CD8-positive, alpha-beta T cell (primary cell): ENCODE measurements at regions of chr11 and their contacts with region 1.

Region 1: GRCh38 chr11:44565211-44565952 is at the start of gene CD82:
- DNase-seq: peak; percentile 88 to 98 (median 95)
- ATAC-seq: peak; percentile 73
- H3K4me3 ChIP-seq: peak within 1 kb of the TSS; percentile 86 to 89
- H3K4me3 Mint-ChIP-seq: peak within 1 kb of the TSS; percentile 82
- H3K27ac ChIP-seq: peak within 1 kb of the TSS; percentile 33 to 71
- H3K27ac Mint-ChIP-seq: peak within 1 kb of the TSS; percentile 82
- H3K4me1 ChIP-seq: peaks cover 47% of the 10 kb centered on the region
- H3K4me1 Mint-ChIP-seq: peaks cover 53% of the 10 kb centered on the region
- H3K27me3 ChIP-seq: no peaks in the 10 kb centered on the region
- H3K27me3 Mint-ChIP-seq: no peaks in the 10 kb centered on the region
- CTCF ChIP-seq: peak; percentile 39
- total RNA-seq, gene CD82: 28.1 to 32.4 TPM

Region 2: GRCh38 chr11:43687120-43687791 is 878.1 kb before region 1 on chr11:
- CTCF ChIA-PET with region 1: no interaction called
- POLR2A ChIA-PET with region 1: no interaction called
- intact Hi-C with region 1: loop called (anchors 5 to 10 kb)
- DNase-seq: no peak
- ATAC-seq: no peak
- H3K4me3 ChIP-seq: no peak overlapping the region
- H3K4me3 Mint-ChIP-seq: no peak overlapping the region
- H3K27ac ChIP-seq: no peak overlapping the region
- H3K27ac Mint-ChIP-seq: no peak overlapping the region
- H3K4me1 ChIP-seq: no peaks in the 10 kb centered on the region
- H3K4me1 Mint-ChIP-seq: peaks cover 37% of the 10 kb centered on the region
- H3K27me3 ChIP-seq: no peaks in the 10 kb centered on the region
- H3K27me3 Mint-ChIP-seq: no peaks in the 10 kb centered on the region
- CTCF ChIP-seq: no peak

Region 3: DNA sequence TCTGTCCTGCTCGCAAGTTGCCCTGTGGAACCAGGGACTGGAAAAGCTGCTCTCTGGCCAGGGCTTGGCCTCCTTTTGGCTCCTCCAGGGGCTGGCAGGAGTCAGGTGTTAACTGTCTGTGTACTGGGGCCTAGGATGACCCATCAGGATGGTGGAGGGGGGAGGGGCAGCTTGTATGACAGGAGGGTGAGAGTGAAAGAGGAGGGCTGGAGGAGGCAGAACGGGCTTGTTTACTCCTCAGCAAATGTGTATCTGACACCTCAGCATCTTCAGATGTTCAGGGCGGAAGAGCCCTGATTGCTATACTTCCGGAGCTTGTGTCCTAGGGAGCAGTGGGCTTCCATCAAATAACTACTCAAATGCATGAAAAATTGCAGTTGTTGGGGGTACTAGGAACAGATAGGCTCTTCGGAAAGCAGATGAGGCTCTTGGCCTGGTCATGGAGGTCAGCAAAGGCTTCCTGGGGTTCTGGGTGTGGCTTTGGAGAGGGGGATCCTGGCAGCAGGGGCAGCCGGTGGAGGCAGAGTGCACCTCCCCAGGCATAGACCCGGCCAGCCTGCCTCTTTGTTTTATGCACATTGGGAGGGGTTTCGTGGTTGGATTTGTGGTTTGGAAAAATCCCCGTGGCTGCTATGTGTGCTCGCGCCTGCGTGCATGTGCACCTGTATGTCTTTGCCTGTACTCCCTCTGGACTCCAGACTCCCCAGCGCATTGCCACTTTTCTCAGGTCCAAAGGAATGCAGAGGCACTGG is 31.3 kb after region 1 on chr11:
- CTCF ChIA-PET with region 1: interaction called, 4 read pairs
- POLR2A ChIA-PET with region 1: interaction called, 5 read pairs
- intact Hi-C with region 1: loop called (anchors 1 to 2 kb)
- DNase-seq: peak; percentile 25 to 88 (median 58)
- ATAC-seq: peak; percentile 83
- H3K4me3 ChIP-seq: peak overlapping the region; percentile 7 to 14
- H3K4me3 Mint-ChIP-seq: peak overlapping the region; percentile 61
- H3K27ac ChIP-seq: peak overlapping the region; percentile 25 to 55
- H3K27ac Mint-ChIP-seq: peak overlapping the region; percentile 93
- H3K4me1 ChIP-seq: peaks cover 31% of the 10 kb centered on the region
- H3K4me1 Mint-ChIP-seq: peaks cover 40% of the 10 kb centered on the region
- H3K27me3 ChIP-seq: no peaks in the 10 kb centered on the region
- H3K27me3 Mint-ChIP-seq: no peaks in the 10 kb centered on the region
- CTCF ChIP-seq: no peak

Region 4: DNA sequence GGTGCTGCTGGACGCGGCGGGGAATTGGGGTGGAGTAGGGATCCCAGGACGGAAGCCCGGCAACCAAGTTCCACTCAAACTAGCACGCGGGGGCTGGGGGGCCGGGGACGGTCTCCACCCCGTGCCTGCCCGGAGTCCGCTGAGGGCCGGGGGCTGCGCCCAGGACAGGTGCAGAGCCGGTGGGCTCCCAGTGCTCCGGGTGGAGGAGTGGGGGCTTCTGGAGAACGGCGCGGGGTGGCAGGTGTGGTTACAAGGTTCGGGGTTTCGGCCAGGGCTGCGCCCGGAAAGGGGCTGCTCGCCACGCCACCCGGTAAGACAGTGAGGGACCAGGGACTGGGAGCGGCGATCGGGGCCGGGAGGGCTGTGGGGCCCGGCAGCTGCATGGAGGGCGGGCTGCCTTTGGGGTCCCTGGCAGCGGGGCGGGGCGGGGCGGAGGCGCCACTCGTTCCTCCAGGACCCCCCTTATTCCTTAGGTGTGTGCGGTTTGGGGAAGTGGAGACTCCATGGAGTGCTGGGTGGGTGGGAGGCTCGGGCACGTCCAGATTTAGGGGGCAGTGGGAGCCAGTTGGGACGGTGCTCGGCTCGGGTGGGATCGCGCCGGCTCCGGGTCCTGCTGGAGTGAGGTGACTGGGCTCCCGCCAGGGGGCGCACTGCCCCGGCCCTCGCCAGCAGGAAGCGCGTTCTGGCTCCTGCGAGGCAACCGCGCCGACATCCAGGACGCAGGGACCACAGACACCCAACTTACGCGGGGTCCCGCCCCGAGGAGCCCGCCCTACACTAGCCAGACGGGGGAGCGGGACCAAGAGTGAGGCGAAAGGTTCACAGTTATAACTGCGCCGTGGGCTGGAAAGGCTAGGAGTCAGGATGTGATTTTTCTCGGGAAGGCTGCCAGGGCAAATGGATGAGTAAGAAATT is 162.2 kb after region 1 on chr11:
- CTCF ChIA-PET with region 1: interaction called, 4 read pairs
- POLR2A ChIA-PET with region 1: no interaction called
- intact Hi-C with region 1: loop called in 1 of 2 experiments (anchors 5 kb)
- DNase-seq: peak; percentile 55 to 87 (median 74)
- ATAC-seq: peak; percentile 71
- H3K4me3 ChIP-seq: peak overlapping the region; percentile 63 to 70
- H3K4me3 Mint-ChIP-seq: peak overlapping the region; percentile 84
- H3K27ac ChIP-seq: no peak overlapping the region
- H3K27ac Mint-ChIP-seq: peak overlapping the region; percentile 27
- H3K4me1 ChIP-seq: peaks cover 18% of the 10 kb centered on the region
- H3K4me1 Mint-ChIP-seq: peaks cover 30% of the 10 kb centered on the region
- H3K27me3 ChIP-seq: peaks cover 3 to 6% of the 10 kb centered on the region in 2 experiments
- H3K27me3 Mint-ChIP-seq: peaks cover 7% of the 10 kb centered on the region
- CTCF ChIP-seq: peak; percentile 90

Region 5: DNA sequence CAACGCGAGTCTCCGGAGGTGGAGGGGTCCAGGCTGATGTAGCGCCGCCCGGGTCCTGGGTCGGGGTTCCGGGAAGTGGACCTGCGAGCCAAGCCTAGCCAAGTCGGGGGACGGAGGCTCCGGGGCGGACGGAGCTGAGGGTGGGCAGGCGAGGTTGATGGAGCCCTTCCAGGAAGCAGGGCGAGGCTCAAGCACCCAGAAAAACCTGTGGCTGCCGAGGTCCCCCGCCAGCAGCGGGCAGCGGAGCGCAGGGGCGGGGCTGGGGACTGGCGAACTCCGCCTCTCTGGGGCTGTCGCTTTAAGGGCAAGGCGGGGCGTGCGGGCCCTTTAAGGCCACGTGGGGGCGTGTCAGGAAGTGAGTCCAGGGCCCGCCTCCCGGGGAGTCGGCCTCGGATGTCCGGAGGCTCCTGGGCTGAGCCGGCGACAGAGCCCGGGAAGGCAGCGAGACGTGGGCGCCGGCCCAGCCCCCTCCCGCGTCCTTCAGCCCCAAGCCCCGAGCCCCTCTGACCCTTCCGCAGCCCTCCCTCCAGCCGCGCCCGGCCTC is 1239.5 kb after region 1 on chr11 and contains the start of gene SLC35C1:
- CTCF ChIA-PET with region 1: no interaction called
- POLR2A ChIA-PET with region 1: no interaction called
- intact Hi-C with region 1: loop called in 1 of 2 experiments (anchors 10 kb)
- DNase-seq: peak; percentile 89 to 98 (median 97)
- ATAC-seq: peak; percentile 96
- H3K4me3 ChIP-seq: peak within 1 kb of the TSS; percentile 97
- H3K4me3 Mint-ChIP-seq: peak within 1 kb of the TSS; percentile 90
- H3K27ac ChIP-seq: peak within 1 kb of the TSS; percentile 76 to 81
- H3K27ac Mint-ChIP-seq: peak within 1 kb of the TSS; percentile 81
- H3K4me1 ChIP-seq: peaks cover 32% of the 10 kb centered on the region
- H3K4me1 Mint-ChIP-seq: peaks cover 44% of the 10 kb centered on the region
- H3K27me3 ChIP-seq: no peaks in the 10 kb centered on the region
- H3K27me3 Mint-ChIP-seq: no peaks in the 10 kb centered on the region
- CTCF ChIP-seq: no peak
- total RNA-seq, gene SLC35C1: 3.1 to 3.3 TPM